Dorsolateral prefrontal cortex (tissue), 120 donors: ENCODE measurements at regions of chr18 and their contacts with region 1.

Region 1: DNA sequence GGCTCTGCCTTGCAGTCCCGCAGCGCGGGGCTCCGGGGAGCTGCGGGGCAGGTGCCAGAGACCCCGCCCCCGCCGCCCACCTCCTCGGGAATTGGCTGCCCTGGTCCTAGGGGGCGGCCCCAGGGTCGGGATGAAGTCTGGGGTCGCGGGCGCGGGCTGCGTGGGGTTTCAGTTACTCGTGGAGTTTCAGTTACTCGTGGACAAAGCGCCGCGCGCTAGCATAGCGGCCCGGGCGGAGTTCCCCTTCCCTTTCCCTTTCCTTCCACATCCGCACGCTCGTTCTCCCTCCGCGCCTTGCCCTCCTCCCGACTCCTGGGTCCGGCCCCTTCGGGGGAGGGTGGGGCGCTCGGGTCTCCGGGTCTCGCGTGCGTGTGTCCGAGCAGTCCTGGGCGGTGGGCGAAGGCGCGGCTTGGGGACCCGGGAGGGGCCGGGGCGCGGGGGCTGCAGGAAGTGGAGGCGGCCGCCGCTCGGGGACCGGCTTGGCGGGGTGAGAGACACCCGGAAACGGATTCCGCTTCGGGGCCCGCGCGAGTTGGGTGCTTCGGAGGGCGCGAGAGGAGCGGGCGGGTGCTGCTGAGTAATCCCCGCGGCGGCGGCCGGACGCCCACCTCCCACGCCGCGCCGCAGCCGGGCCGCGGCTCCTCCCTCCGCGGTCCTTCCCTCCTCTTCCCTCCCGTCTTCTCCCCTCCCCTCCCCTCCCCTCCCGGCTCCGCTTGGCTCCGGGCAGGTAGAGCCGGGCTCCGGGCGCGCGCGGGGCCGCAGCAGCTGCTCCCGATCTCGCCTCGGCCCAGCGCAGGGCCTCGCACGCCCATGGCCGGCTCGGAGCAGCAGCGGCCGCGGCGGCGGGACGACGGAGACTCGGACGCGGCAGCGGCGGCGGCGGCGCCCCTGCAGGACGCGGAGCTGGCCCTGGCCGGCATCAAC is at the start of gene TTC39C:
- DNase-seq: peak in 9 of 10 donors; percentile 30 to 79 (median 60)
- H3K4me3 ChIP-seq: peak within 1 kb of the TSS; percentile 47 to 88 (median 75)
- H3K27ac ChIP-seq: peak within 1 kb of the TSS in 54 of 59 donors; percentile 5 to 89 (median 70)
- H3K27me3 ChIP-seq: peaks cover 0 to 14% (median 0%) of the 10 kb centered on the region in 45 donors
- CTCF ChIP-seq: no peak
- total RNA-seq, gene TTC39C: 15.1 to 55.8 (median 34.2) TPM

Region 2: DNA sequence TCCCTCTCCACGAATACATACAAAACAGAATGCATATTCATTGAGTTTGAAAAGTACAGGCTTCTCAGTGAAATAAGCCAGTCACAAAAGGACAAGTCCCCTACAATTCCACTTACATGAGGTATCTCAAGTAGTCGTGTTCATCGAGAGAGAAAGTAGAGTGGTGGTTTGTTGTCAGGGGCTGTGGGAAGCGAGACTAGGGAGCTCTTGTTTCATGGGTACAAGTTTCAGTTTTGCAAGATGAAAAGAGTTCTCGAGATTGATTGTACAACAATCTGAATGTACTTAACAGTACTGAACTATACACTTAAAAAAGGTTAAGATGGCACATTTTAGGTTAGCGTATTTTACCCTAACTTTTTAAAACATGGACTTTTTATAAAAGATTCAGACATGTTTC is 71.2 kb before region 1 on chr18:
- intact Hi-C with region 1: loop called in 1 of 2 experiments (anchors 10 kb)
- DNase-seq: no peak
- H3K4me3 ChIP-seq: no peak overlapping the region
- H3K27ac ChIP-seq: peak overlapping the region in 7 of 59 donors; percentile 15 to 73 (median 51)
- H3K27me3 ChIP-seq: no peaks in the 10 kb centered on the region
- CTCF ChIP-seq: no peak

Region 3: DNA sequence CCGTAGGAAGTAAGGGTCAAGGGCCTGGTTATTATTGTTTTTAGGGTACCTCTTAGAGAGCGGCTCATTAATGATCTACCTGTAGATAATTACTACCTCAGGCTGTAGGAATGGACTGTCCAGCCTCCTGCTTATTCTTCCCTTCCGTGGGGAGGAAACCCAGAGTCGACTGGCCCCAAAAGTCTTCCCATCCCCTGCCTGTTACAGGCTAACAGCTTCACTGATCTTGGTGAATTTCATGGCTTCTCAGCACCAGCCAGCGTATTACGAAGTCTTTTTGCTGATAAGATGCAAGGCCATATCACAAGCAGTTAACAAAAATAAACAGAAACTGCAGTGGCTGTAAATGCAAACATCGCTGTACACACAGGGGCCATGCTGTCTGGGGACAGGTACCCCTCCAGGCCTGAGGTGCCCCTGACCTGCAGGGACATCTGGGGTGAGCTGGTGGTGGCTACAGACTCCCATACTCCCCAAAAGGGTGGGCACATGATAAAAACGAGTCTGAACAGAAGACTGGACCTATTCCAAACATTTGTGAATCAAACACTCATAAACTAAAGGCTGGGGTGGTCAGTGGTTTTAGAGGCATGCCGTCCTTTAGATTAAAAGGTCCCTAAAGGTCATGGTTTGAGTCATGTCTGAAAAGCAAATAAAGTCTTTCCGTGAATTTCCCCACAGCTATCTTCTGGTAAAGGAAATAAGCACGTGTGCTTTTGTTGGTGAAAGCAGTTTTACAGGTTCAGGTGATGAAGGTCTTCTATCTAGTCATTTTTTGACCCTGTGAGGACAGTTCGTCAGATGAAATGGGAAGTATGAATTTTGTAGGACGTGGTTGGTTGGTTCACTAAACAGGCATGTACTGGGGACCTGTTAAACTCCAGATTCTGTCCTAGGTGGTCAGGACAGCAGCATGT is 37.0 kb after region 1 on chr18:
- intact Hi-C with region 1: loop called in 1 of 2 experiments (anchors 10 kb)
- DNase-seq: no peak
- H3K4me3 ChIP-seq: no peak overlapping the region
- H3K27ac ChIP-seq: no peak overlapping the region
- H3K27me3 ChIP-seq: no peaks in the 10 kb centered on the region
- CTCF ChIP-seq: no peak

Region 4: DNA sequence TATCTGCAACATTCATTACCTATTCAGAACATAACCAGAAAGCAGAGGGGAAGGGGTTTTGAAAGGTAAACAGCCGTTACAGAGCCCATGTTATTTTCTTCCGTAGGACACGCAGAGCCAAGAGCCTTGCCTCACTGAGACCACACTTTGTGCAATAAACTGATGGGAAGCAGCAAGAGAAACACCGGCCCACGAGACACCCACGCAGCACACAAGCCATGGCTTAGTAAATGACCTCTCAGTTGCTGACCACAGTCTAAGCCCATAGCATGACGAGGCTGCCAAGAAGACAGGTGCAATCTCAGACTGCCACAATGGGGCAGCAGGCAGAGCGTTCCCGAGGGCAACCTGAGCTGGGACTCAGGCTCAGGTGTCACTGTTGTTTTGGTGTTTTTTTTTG is 184.1 kb after region 1 on chr18:
- intact Hi-C with region 1: no loop called
- DNase-seq: no peak
- H3K4me3 ChIP-seq: no peak overlapping the region
- H3K27ac ChIP-seq: peak overlapping the region; percentile 67 to 100 (median 97)
- H3K27me3 ChIP-seq: no peaks in the 10 kb centered on the region
- CTCF ChIP-seq: no peak